ENCODE measurements at regions of chr4 and their contacts with region 1.

Region 1: DNA sequence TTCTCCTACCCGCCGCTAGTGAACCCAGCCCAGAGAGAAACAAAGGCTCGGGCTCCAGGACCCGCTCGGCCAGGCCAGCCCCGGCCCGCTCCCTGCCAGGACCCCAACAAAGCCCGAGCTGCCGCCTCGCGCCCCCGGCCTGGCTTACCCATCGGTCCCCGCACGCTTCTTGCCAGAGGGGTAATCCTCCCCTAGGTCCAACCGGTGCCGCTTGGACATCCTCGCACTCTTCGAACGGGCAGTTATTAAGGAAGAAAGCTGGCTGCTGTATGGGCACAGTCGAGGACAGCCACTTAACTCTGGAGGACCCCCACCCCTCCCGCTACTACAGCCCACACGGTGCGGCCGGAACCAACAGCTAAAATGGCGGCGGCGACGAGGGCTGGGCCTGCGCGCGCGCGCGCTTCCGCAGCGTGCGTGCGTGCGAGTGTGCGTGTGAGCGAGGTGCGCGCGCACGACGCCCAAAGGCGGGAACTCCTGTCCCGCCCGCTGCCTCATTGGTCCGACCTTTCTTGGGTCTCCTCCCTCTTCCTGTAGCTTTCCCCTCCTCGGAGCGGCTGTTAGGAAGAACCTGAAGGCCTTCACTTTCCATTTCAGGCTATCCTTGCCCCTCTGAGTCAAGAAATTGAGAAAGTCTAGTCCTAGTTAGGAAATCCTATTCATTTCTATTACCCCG is at the start of gene DHX15:
- DNase-seq: peak; percentile 95
- H3K4me3 Mint-ChIP-seq: peak within 1 kb of the TSS; percentile 94
- H3K27ac Mint-ChIP-seq: peak within 1 kb of the TSS; percentile 95
- H3K4me1 Mint-ChIP-seq: peaks cover 32% of the 10 kb centered on the region
- H3K27me3 Mint-ChIP-seq: peaks cover 3% of the 10 kb centered on the region
- total RNA-seq, gene DHX15: 169 to 172 TPM

Region 2: GRCh38 chr4:23333946-23334878 is 1250.1 kb before region 1 on chr4:
- CTCF ChIA-PET with region 1: no interaction called
- POLR2A ChIA-PET with region 1: no interaction called
- intact Hi-C with region 1: loop called (anchors 5 kb)
- DNase-seq: peak; percentile 34
- H3K4me3 Mint-ChIP-seq: peak overlapping the region; percentile 26
- H3K27ac Mint-ChIP-seq: peak overlapping the region; percentile 87
- H3K4me1 Mint-ChIP-seq: peaks cover 31% of the 10 kb centered on the region
- H3K27me3 Mint-ChIP-seq: no peaks in the 10 kb centered on the region

Region 3: GRCh38 chr4:24515698-24516097 is 68.6 kb before region 1 on chr4:
- CTCF ChIA-PET with region 1: no interaction called
- POLR2A ChIA-PET with region 1: interaction called, 5 read pairs
- intact Hi-C with region 1: loop called (anchors 2 kb)
- DNase-seq: no peak
- H3K4me3 Mint-ChIP-seq: no peak overlapping the region
- H3K27ac Mint-ChIP-seq: no peak overlapping the region
- H3K4me1 Mint-ChIP-seq: peaks cover 17% of the 10 kb centered on the region
- H3K27me3 Mint-ChIP-seq: no peaks in the 10 kb centered on the region

Region 4: GRCh38 chr4:24557026-24558025 is 27.0 kb before region 1 on chr4:
- CTCF ChIA-PET with region 1: interaction called, 4 read pairs
- POLR2A ChIA-PET with region 1: no interaction called
- intact Hi-C with region 1: loop called (anchors 2 kb)
- DNase-seq: no peak
- H3K4me3 Mint-ChIP-seq: peak overlapping the region; percentile 7
- H3K27ac Mint-ChIP-seq: peak overlapping the region; percentile 47
- H3K4me1 Mint-ChIP-seq: peaks cover 70% of the 10 kb centered on the region
- H3K27me3 Mint-ChIP-seq: no peaks in the 10 kb centered on the region

Region 5: DNA sequence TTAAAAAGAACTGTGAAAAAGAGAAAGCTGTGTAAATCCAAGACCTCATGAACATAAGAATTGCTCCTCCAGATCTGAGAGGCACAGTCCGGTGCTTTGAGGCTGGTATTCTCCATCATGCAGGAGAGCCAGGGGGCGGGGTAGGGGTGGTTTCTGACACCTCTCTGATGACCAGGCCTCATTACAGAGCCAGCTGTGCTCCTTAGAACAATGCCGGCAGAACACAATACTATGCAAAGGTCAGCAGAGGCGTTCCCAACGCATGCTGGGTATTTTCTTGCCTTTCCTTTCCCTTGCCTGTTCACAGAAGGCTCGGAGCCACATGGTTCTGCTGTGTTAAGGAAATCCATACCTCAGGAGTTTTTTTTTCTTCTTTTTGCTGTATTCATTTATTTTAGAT is 119.8 kb after region 1 on chr4:
- CTCF ChIA-PET with region 1: no interaction called
- POLR2A ChIA-PET with region 1: no interaction called
- intact Hi-C with region 1: no loop called
- DNase-seq: no peak
- H3K4me3 Mint-ChIP-seq: no peak overlapping the region
- H3K27ac Mint-ChIP-seq: no peak overlapping the region
- H3K4me1 Mint-ChIP-seq: no peaks in the 10 kb centered on the region
- H3K27me3 Mint-ChIP-seq: peaks cover 5% of the 10 kb centered on the region

Region 6: DNA sequence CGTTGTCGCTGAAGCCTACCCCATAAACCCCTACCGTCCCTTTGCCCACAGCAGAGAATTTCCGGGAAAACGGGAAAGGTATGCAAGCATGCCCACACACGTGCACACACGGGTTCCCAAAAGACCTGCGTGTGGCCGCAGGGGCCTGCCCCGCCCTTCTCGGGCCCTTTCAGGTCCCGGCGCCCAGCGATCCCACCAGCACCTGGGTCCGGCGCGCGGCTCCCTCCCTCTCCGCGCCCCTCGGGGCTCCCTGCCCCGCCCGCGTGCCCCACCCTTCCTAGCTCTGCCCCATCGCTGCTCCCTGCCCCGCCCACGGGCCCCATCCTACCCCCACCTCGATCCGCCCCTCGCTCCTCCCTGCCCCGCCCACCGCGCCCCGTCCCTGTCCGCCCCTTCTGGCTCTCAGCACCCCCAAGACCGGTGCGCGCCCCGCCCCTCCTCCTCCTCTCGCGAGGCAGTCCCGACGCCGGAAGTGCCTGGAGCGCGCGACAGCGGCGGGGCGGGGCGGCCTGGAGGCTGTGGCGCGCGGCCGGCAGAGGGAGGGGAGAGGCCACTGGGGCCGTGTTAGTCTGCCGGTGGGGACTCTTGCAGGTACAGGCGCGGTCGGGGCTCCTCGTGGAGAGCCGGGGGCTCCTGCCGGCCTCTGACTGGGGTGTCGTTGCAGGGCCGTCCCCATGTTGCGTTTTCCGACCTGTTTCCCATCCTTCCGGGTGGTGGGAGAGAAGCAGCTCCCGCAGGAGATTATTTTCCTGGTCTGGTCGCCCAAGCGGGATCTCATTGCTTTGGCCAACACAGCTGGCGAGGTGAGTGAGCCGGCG is 792.6 kb after region 1 on chr4 and contains the start of gene ANAPC4:
- CTCF ChIA-PET with region 1: no interaction called
- POLR2A ChIA-PET with region 1: no interaction called
- intact Hi-C with region 1: loop called (anchors 10 kb)
- DNase-seq: peak; percentile 98
- H3K4me3 Mint-ChIP-seq: no peak within 1 kb of the TSS
- H3K27ac Mint-ChIP-seq: peak within 1 kb of the TSS; percentile 72
- H3K4me1 Mint-ChIP-seq: peaks cover 6% of the 10 kb centered on the region
- H3K27me3 Mint-ChIP-seq: no peaks in the 10 kb centered on the region
- total RNA-seq, gene ANAPC4: 26.1 to 31.5 TPM